Cardiac septum (tissue), 1 donor: ENCODE measurements at regions of chr12 and their contacts with region 1.

Region 1: DNA sequence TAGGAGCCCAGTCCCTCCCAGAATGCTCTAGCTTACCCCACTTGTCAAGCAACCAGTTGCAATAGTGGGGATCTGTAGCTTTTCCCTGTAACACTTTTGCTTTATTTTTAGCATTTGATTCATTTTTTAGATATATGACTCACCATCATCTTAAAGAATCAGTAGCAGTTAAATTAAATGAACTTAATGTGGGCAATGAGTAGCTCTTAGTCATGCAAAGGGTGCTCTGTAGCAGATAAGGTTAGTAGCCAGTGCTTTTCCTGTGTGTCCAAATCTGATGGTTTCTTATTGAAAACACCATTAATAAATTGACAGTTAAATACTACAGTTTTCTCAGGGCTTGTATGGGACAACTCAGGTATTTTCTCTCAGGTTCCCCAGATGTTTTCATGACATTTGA is 311.8 kb downstream of the RERGL start:
- DNase-seq: no peak

Region 2: GRCh38 chr12:17763366-17763765 is 14.9 kb before region 1 on chr12:
- intact Hi-C with region 1: no loop called
- DNase-seq: no peak

Region 3: GRCh38 chr12:17866802-17867201 is 88.6 kb after region 1 on chr12:
- intact Hi-C with region 1: loop called (anchors 2 kb)
- DNase-seq: no peak

Region 4: DNA sequence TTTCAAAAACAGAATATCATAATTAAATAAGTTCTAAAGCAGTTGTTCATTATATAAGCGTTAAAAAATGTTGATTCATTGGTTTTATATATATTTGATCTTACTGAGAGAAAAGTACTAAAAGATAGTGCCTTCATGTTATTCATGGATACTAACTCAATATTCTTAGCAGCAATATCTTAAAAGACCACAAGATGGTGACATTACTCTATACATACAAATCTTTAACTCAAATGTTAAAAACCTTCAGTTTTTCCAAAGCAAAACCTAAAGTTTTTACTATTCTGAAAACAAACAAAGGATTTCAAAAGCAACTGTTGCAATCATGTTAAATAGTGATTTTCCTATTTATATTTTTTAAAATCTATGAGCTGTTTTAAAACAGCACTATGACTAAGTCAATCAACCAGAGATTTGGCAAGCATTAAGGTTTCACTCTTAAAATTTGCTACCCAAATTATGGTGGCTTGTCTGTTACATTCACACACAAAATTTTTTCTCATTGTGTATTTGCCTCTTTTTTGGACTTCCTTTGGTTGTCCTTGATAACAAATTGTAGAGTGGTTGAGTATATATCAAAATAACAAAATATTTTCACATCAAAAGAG is 361.9 kb after region 1 on chr12:
- intact Hi-C with region 1: no loop called
- DNase-seq: no peak